ENCODE measurements at regions of chr5 and their contacts with region 1.

Region 1: DNA sequence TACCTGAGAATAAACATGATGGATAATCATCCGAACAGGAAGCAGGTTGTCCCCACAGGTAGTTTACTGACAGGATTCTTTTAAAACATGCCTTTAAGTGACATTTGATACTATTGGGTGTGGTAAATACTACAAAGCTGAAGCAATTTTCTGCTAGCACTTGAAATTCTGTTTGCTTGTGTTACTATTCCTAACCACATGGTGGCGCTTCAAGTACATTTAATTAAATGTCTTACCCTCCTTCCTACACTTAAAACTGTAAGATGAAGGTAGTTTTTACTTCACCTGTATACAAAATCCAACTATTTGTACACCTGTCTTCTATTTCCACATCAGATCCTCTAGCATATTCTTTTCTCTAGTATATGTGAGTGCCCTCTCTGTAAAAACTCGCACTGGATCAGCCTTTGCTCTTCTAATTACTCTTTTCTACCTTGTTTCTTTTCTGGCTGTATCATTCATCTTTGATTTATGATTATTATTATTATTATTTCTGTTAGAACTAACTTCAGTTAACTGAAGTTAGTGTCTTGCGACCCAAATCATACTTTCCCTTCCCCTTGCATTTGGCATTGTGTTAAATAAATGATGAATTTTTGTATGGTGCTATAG is 18.4 kb downstream of the SLC25A46 start:
- DNase-seq: peak; percentile 12
- H3K4me3 Mint-ChIP-seq: no peak overlapping the region
- H3K27ac Mint-ChIP-seq: no peak overlapping the region
- H3K4me1 Mint-ChIP-seq: peaks cover 31% of the 10 kb centered on the region
- H3K27me3 Mint-ChIP-seq: no peaks in the 10 kb centered on the region

Region 2: DNA sequence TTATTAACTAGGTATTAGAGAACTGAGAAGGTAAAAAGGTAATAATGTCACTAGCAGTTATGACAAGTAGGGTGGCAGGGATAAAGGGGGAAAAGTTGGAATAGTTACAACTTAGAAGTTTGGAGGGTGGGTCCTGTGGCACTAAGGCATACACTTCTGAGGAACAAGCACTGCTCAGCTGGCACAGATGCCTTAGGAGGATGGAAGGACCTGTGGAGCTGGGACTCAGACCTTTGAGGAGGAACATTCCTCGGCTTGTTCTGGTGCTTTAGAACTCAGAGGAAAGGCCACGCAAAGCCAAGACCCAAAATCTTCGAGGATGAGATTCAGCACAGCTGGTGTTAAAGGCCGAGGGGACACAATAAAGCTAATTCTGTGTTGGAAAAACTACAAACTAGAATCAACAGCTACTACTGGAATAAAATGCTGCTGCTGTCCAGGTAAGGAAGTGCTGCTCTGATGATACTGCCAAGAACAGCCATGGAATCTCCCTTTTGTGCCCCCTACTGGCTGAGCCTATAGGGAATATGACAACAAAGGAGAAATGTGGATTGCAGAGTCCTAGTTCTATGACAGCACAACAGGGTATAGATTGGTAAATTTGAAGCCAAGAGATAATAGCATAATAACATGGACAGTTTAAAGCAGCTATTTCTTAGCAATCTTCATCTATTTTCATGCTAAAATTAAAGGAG is 108.3 kb after region 1 on chr5:
- intact Hi-C with region 1: loop called (anchors 1 kb)
- DNase-seq: no peak
- H3K4me3 Mint-ChIP-seq: no peak overlapping the region
- H3K27ac Mint-ChIP-seq: no peak overlapping the region
- H3K4me1 Mint-ChIP-seq: no peaks in the 10 kb centered on the region
- H3K27me3 Mint-ChIP-seq: no peaks in the 10 kb centered on the region

Region 3: DNA sequence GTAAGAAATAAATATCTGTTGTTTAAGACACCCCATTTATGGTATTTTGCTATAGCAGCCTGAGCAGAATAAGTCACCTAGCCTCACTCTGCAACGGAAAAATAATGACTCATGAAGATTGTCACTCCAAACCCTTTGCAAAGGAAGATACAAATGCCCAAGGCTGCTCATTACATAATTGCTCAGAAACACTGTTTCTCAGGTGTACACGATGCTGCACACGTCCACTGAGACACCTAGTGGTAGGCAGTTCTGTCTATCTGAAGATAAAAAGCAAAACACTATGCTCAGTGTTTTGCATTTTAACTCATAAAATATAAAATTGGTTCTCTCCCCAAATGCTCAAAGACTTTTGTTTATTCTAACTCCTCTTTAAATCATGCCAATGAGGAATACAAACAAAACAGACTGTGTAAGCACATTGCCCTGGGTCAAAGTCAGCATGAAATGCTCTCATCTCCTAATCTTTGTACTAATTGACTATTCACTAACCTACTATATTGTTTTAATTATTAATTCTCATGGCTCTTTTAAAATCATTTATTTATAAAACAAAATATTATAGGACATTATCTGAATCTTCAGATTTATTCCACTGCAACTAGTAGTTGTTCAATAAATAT is 306.6 kb after region 1 on chr5:
- intact Hi-C with region 1: loop called (anchors 2 kb)
- DNase-seq: no peak
- H3K4me3 Mint-ChIP-seq: no peak overlapping the region
- H3K27ac Mint-ChIP-seq: no peak overlapping the region
- H3K4me1 Mint-ChIP-seq: no peaks in the 10 kb centered on the region
- H3K27me3 Mint-ChIP-seq: peaks cover 54% of the 10 kb centered on the region

Region 4: GRCh38 chr5:111158105-111158744 is 401.0 kb after region 1 on chr5:
- intact Hi-C with region 1: loop called (anchors 1 kb)
- DNase-seq: peak; percentile 62
- H3K4me3 Mint-ChIP-seq: no peak overlapping the region
- H3K27ac Mint-ChIP-seq: no peak overlapping the region
- H3K4me1 Mint-ChIP-seq: peaks cover 4% of the 10 kb centered on the region
- H3K27me3 Mint-ChIP-seq: no peaks in the 10 kb centered on the region

Region 5: DNA sequence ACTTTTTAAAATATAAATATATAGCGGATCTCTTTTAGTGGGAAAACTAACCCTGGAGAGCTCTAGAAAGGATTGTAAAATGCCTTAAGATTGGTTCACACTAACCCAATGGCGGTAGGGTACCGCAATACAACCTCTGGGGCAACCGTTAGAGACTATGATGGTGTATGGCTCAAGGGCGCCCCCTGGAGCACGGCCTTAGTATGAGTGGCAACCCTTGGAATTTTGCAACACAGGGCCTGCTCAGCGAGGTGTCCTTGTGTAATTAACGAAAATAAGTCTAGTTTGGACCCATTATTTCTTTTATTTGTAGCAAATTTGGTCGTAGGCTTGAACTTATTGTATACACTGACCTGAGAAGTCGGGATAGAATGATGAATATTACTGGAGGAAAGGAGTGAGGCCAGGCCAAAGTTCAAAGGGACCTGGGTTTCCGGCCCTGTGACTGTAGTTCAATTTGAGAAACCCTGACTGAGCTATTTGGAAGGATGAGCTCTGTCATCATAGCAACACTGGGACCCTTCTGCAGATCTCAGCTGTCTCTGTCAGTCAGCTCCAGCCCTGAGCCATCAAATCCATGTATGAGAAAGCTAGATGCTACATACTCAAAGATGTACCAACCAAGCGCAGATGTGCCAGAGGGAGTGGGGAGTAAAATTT is 521.8 kb after region 1 on chr5:
- intact Hi-C with region 1: loop called (anchors 1 kb)
- DNase-seq: peak; percentile 75
- H3K4me3 Mint-ChIP-seq: no peak overlapping the region
- H3K27ac Mint-ChIP-seq: no peak overlapping the region
- H3K4me1 Mint-ChIP-seq: peaks cover 27% of the 10 kb centered on the region
- H3K27me3 Mint-ChIP-seq: no peaks in the 10 kb centered on the region